Naive thymus-derived CD4-positive, alpha-beta T cell (primary cell): ENCODE measurements at regions of chr11 and their contacts with region 1.

Region 1: GRCh38 chr11:102268329-102269193 is 48.7 kb upstream of the BIRC3 start:
- DNase-seq: peak; percentile 55 to 85 (median 80)
- ATAC-seq: peak; percentile 99
- H3K4me3 ChIP-seq: peak overlapping the region; percentile 59
- H3K4me3 Mint-ChIP-seq: peak overlapping the region; percentile 77 to 97 (median 82)
- H3K27ac ChIP-seq: no peak overlapping the region
- H3K27ac Mint-ChIP-seq: peak overlapping the region; percentile 6 to 88 (median 75)
- H3K4me1 ChIP-seq: peaks cover 10 to 17% of the 10 kb centered on the region in 2 donors
- H3K4me1 Mint-ChIP-seq: peaks cover 14 to 47% (median 38%) of the 10 kb centered on the region in 7 donors
- H3K27me3 ChIP-seq: no peaks in the 10 kb centered on the region
- H3K27me3 Mint-ChIP-seq: peaks cover 0 to 49% (median 6%) of the 10 kb centered on the region in 5 donors

Region 2: DNA sequence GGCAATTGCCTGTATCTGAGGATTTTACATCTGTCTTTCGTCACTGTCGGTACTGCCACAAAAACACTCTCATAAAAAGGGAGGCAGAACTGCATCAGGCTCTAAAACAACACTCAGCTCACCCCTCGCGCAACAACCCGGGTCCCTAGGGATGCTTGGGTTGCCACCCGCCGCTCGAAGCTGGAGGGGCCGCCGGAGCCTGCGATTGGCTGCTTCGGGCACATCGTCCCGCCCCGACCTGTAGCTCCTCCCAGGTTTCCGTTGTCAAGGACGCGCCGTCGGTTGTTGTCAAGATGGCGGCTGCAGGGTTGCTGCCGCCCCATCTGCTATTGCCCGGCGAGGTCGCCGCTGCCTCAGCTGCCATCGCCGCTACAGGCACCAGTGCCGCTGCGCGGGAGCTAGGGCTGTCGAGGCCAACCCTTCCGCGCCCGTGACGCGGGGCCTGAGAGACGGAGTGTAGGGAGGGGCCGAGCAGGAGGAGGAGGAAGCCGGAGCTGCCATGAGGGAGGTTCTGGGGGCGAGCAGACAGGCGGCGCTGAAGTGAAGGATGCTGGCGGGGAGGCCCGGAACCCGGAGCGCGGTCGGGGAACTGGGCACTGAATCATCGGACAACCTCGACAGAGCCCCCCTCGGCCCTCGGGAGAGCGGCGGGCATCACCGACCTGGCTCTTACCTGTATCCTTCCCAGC is 353.7 kb before region 1 on chr11 and contains the start of gene CEP126:
- CTCF ChIA-PET with region 1: no interaction called
- POLR2A ChIA-PET with region 1: no interaction called
- intact Hi-C with region 1: loop called in 1 of 2 experiments (anchors 2 kb)
- DNase-seq: peak; percentile 89 to 96 (median 92)
- ATAC-seq: peak; percentile 93
- H3K4me3 ChIP-seq: peak within 1 kb of the TSS; percentile 78
- H3K4me3 Mint-ChIP-seq: peak within 1 kb of the TSS; percentile 90 to 97 (median 94)
- H3K27ac ChIP-seq: peak within 1 kb of the TSS; percentile 68
- H3K27ac Mint-ChIP-seq: peak within 1 kb of the TSS; percentile 79 to 95 (median 89)
- H3K4me1 ChIP-seq: peaks cover 10 to 13% of the 10 kb centered on the region in 2 donors
- H3K4me1 Mint-ChIP-seq: peaks cover 18 to 30% (median 26%) of the 10 kb centered on the region in 7 donors
- H3K27me3 ChIP-seq: no peaks in the 10 kb centered on the region
- H3K27me3 Mint-ChIP-seq: peaks cover 0 to 6% (median 0%) of the 10 kb centered on the region in 5 donors
- total RNA-seq, gene CEP126: 0.39 to 3.4 (median 2.6) TPM

Region 3: GRCh38 chr11:102254045-102254444 is 14.5 kb before region 1 on chr11:
- CTCF ChIA-PET with region 1: interaction called, 7 read pairs
- POLR2A ChIA-PET with region 1: no interaction called
- intact Hi-C with region 1: loop called in 1 of 2 experiments (anchors 1 kb)
- DNase-seq: no peak
- ATAC-seq: no peak
- H3K4me3 ChIP-seq: no peak overlapping the region
- H3K4me3 Mint-ChIP-seq: no peak overlapping the region
- H3K27ac ChIP-seq: no peak overlapping the region
- H3K27ac Mint-ChIP-seq: no peak overlapping the region
- H3K4me1 ChIP-seq: no peaks in the 10 kb centered on the region
- H3K4me1 Mint-ChIP-seq: no peaks in the 10 kb centered on the region
- H3K27me3 ChIP-seq: no peaks in the 10 kb centered on the region
- H3K27me3 Mint-ChIP-seq: no peaks in the 10 kb centered on the region

Region 4: GRCh38 chr11:102287964-102288724 is 19.6 kb after region 1 on chr11:
- CTCF ChIA-PET with region 1: interaction called, 14 read pairs
- POLR2A ChIA-PET with region 1: interaction called, 3 read pairs
- intact Hi-C with region 1: no loop called
- DNase-seq: peak in 7 of 9 donors; percentile 51 to 73 (median 66)
- ATAC-seq: peak; percentile 86
- H3K4me3 ChIP-seq: no peak overlapping the region
- H3K4me3 Mint-ChIP-seq: peak overlapping the region in 9 of 10 donors; percentile 12 to 73 (median 60)
- H3K27ac ChIP-seq: no peak overlapping the region
- H3K27ac Mint-ChIP-seq: peak overlapping the region in 6 of 9 donors; percentile 15 to 56 (median 38)
- H3K4me1 ChIP-seq: peaks cover 3 to 5% of the 10 kb centered on the region in 2 donors
- H3K4me1 Mint-ChIP-seq: peaks cover 9 to 33% (median 27%) of the 10 kb centered on the region in 7 donors
- H3K27me3 ChIP-seq: no peaks in the 10 kb centered on the region
- H3K27me3 Mint-ChIP-seq: no peaks in the 10 kb centered on the region

Region 5: GRCh38 chr11:102317099-102317767 is 48.7 kb after region 1 on chr11 and contains the start of gene BIRC3:
- CTCF ChIA-PET with region 1: interaction called, 3 read pairs
- POLR2A ChIA-PET with region 1: no interaction called
- intact Hi-C with region 1: loop called in 1 of 2 experiments (anchors 1 kb)
- DNase-seq: peak; percentile 77 to 98 (median 93)
- ATAC-seq: peak; percentile 94
- H3K4me3 ChIP-seq: peak within 1 kb of the TSS; percentile 74
- H3K4me3 Mint-ChIP-seq: peak within 1 kb of the TSS; percentile 85 to 98 (median 96)
- H3K27ac ChIP-seq: peak within 1 kb of the TSS; percentile 97
- H3K27ac Mint-ChIP-seq: peak within 1 kb of the TSS; percentile 93 to 99 (median 98)
- H3K4me1 ChIP-seq: peaks cover 43 to 58% of the 10 kb centered on the region in 2 donors
- H3K4me1 Mint-ChIP-seq: peaks cover 44 to 87% (median 74%) of the 10 kb centered on the region in 7 donors
- H3K27me3 ChIP-seq: no peaks in the 10 kb centered on the region
- H3K27me3 Mint-ChIP-seq: peaks cover 0 to 2% (median 0%) of the 10 kb centered on the region in 5 donors
- total RNA-seq, gene BIRC3: 62.3 to 160 (median 128) TPM

Region 6: GRCh38 chr11:102399189-102399588 is 130.6 kb after region 1 on chr11:
- CTCF ChIA-PET with region 1: no interaction called
- POLR2A ChIA-PET with region 1: no interaction called
- intact Hi-C with region 1: no loop called
- DNase-seq: no peak
- ATAC-seq: no peak
- H3K4me3 ChIP-seq: no peak overlapping the region
- H3K4me3 Mint-ChIP-seq: no peak overlapping the region
- H3K27ac ChIP-seq: no peak overlapping the region
- H3K27ac Mint-ChIP-seq: peak overlapping the region in 5 of 9 donors; percentile 8 to 81 (median 18)
- H3K4me1 ChIP-seq: peaks cover 0 to 39% of the 10 kb centered on the region in 2 donors
- H3K4me1 Mint-ChIP-seq: peaks cover 29 to 76% (median 58%) of the 10 kb centered on the region in 7 donors
- H3K27me3 ChIP-seq: no peaks in the 10 kb centered on the region
- H3K27me3 Mint-ChIP-seq: no peaks in the 10 kb centered on the region

Region 7: GRCh38 chr11:103354656-103355055 is 1086.1 kb after region 1 on chr11:
- CTCF ChIA-PET with region 1: no interaction called
- POLR2A ChIA-PET with region 1: no interaction called
- intact Hi-C with region 1: no loop called
- DNase-seq: no peak
- ATAC-seq: no peak
- H3K4me3 ChIP-seq: no peak overlapping the region
- H3K4me3 Mint-ChIP-seq: no peak overlapping the region
- H3K27ac ChIP-seq: no peak overlapping the region
- H3K27ac Mint-ChIP-seq: no peak overlapping the region
- H3K4me1 ChIP-seq: no peaks in the 10 kb centered on the region
- H3K4me1 Mint-ChIP-seq: peaks cover 0 to 1% (median 0%) of the 10 kb centered on the region in 7 donors
- H3K27me3 ChIP-seq: no peaks in the 10 kb centered on the region
- H3K27me3 Mint-ChIP-seq: no peaks in the 10 kb centered on the region